ENCODE measurements at regions of chr2 and their contacts with region 1.

Region 1: GRCh38 chr2:238239872-238240751 is at the start of gene HES6:
- DNase-seq: peak; percentile 84
- H3K4me3 ChIP-seq: peak within 1 kb of the TSS; percentile 6 to 36 (median 7)
- H3K27ac ChIP-seq: no peak within 1 kb of the TSS
- H3K4me1 ChIP-seq: peaks cover 3% of the 10 kb centered on the region
- H3K27me3 ChIP-seq: peaks cover 9 to 12% of the 10 kb centered on the region in 2 experiments
- CTCF ChIP-seq: no peak
- POLR2A ChIP-seq: peak; percentile 57
- total RNA-seq, gene HES6: 5.1 and 5.4 TPM in 2 replicates

Region 2: DNA sequence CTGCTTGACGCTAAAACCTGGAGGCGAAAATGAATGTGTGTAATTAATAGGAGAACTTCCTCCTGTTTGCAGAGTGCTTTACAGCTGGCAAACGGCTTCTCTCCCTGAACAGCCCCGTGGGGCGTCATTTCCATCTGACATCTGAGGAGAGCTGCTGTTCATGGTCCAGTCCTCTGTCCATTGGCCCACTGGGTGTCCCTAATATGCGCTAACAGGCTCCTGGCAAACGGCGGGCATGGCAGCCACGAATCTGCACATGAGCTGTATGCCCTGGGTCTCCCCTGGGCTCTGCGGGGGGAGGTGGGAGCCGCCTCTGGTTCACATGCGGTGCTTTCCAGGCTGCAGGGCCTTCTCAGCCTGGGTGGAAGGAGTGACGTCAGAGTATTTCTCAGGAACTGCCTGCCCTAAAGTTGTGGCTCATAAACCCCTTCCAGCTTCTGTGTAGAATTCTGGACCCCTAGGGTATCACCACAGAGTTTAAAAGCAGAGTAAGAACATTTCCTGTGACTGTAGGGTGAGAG is 539.5 kb before region 1 on chr2:
- CTCF ChIA-PET with region 1: no interaction called
- POLR2A ChIA-PET with region 1: no interaction called
- dilution Hi-C with region 1: no loop called
- intact Hi-C with region 1: no loop called
- DNase-seq: peak; percentile 85
- H3K4me3 ChIP-seq: no peak overlapping the region
- H3K27ac ChIP-seq: peak overlapping the region; percentile 52
- H3K4me1 ChIP-seq: peaks cover 86% of the 10 kb centered on the region
- H3K27me3 ChIP-seq: no peaks in the 10 kb centered on the region
- CTCF ChIP-seq: no peak
- POLR2A ChIP-seq: no peak

Region 3: DNA sequence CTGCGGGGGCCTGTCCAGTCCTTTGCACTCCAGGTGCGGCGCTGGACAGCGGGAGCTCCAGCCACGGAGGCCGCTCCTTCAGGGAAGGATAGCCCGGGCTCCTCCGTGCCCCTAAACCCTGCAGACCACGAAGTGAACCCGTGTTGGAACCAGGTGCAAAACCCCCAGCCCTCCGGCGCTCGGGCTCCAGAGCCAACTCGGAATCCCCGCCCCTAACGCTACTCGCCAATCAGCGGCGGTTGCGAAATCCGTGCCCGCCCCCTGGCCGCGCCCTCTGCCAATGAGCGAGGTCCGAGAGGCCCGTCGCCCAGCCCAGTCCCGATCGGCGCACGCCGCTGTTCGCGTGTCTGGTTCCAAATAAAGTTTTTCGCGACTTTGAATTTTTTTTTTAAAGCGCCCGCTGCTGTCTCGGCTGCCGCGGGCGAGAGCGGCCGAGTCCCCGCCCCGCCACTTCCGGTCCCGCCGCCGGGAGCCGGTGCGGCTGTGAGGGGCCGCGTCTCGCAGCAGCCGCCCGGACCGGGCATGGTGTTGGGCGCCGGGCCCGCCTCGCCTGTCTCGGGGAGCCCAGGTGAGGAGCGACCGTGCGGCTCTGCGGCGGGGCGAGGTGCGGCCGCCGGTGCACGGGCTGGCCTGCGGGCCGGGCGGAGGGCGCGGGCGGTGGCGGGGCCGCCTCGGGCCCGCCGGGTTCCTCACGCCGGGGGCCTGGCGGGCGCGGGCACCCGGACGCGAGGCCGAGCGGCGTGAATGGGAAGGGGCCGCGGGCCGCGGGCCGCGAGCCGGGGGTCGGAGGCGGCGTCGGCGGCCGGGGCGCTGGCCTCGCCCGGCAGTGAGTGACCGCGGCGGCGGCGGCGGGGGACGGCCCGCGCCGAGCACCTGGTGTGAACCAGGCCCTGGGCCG is 273.3 kb before region 1 on chr2 and contains the start of gene UBE2F:
- CTCF ChIA-PET with region 1: no interaction called
- POLR2A ChIA-PET with region 1: no interaction called
- dilution Hi-C with region 1: no loop called
- intact Hi-C with region 1: loop called (anchors 10 kb)
- DNase-seq: peak; percentile 96
- H3K4me3 ChIP-seq: peak within 1 kb of the TSS; percentile 40 to 65 (median 63)
- H3K27ac ChIP-seq: no peak within 1 kb of the TSS
- H3K4me1 ChIP-seq: peaks cover 10% of the 10 kb centered on the region
- H3K27me3 ChIP-seq: no peaks in the 10 kb centered on the region
- CTCF ChIP-seq: no peak
- POLR2A ChIP-seq: peak; percentile 73
- total RNA-seq, gene UBE2F: 42.3 and 47.4 TPM in 2 replicates

Region 4: GRCh38 chr2:238060542-238061314 is 179.4 kb before region 1 on chr2 and contains the start of gene SCLY:
- CTCF ChIA-PET with region 1: no interaction called
- POLR2A ChIA-PET with region 1: no interaction called
- dilution Hi-C with region 1: no loop called
- intact Hi-C with region 1: loop called (anchors 10 kb)
- DNase-seq: peak; percentile 98
- H3K4me3 ChIP-seq: peak within 1 kb of the TSS; percentile 72 to 87 (median 77)
- H3K27ac ChIP-seq: peak within 1 kb of the TSS; percentile 54
- H3K4me1 ChIP-seq: peaks cover 10% of the 10 kb centered on the region
- H3K27me3 ChIP-seq: no peaks in the 10 kb centered on the region
- CTCF ChIP-seq: no peak
- POLR2A ChIP-seq: peak; percentile 68
- total RNA-seq, gene SCLY: 28.6 and 32.7 TPM in 2 replicates

Region 5: GRCh38 chr2:238277695-238278094 is 37.6 kb after region 1 on chr2:
- CTCF ChIA-PET with region 1: no interaction called
- POLR2A ChIA-PET with region 1: no interaction called
- dilution Hi-C with region 1: no loop called
- intact Hi-C with region 1: loop called (anchors 1 kb)
- DNase-seq: no peak
- H3K4me3 ChIP-seq: no peak overlapping the region
- H3K27ac ChIP-seq: no peak overlapping the region
- H3K4me1 ChIP-seq: no peaks in the 10 kb centered on the region
- H3K27me3 ChIP-seq: no peaks in the 10 kb centered on the region
- CTCF ChIP-seq: no peak
- POLR2A ChIP-seq: no peak

Region 6: DNA sequence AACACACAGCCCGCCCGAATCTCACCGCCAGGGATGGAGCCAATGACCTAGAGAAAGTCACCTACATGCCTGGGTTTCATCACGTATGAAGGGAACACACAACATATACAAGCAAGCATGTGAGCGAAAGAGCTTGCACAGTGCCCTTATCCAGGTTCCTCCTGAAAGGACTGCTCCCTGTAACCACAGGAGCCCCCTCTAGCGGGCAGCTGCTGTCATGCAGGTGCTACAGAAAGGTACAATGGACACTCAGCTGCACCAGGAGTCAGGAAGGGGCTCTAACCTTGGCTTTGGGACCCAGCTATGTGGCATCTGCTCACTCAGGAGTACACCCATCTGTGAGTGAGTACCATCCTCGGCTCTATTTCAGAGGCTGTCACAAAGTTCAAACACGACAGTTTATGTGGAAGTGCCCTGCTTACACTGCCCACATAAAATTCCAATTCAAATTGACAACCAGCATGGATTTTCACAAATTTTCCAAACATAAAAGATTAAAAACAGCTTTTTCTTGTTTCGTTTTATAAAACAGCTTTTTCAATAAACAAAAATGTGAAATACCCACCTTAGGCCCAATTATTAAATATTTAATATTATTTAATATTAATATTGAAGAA is 1781.5 kb after region 1 on chr2:
- CTCF ChIA-PET with region 1: no interaction called
- POLR2A ChIA-PET with region 1: no interaction called
- dilution Hi-C with region 1: no loop called
- intact Hi-C with region 1: no loop called
- DNase-seq: peak; percentile 65
- H3K4me3 ChIP-seq: no peak overlapping the region
- H3K27ac ChIP-seq: no peak overlapping the region
- H3K4me1 ChIP-seq: peaks cover 10% of the 10 kb centered on the region
- H3K27me3 ChIP-seq: no peaks in the 10 kb centered on the region
- CTCF ChIP-seq: peak; percentile 95 to 97
- POLR2A ChIP-seq: no peak

Measured in endothelial cell of umbilical vein (primary cell).